ENCODE measurements at regions of chr6 and their contacts with region 1.

Region 1: DNA sequence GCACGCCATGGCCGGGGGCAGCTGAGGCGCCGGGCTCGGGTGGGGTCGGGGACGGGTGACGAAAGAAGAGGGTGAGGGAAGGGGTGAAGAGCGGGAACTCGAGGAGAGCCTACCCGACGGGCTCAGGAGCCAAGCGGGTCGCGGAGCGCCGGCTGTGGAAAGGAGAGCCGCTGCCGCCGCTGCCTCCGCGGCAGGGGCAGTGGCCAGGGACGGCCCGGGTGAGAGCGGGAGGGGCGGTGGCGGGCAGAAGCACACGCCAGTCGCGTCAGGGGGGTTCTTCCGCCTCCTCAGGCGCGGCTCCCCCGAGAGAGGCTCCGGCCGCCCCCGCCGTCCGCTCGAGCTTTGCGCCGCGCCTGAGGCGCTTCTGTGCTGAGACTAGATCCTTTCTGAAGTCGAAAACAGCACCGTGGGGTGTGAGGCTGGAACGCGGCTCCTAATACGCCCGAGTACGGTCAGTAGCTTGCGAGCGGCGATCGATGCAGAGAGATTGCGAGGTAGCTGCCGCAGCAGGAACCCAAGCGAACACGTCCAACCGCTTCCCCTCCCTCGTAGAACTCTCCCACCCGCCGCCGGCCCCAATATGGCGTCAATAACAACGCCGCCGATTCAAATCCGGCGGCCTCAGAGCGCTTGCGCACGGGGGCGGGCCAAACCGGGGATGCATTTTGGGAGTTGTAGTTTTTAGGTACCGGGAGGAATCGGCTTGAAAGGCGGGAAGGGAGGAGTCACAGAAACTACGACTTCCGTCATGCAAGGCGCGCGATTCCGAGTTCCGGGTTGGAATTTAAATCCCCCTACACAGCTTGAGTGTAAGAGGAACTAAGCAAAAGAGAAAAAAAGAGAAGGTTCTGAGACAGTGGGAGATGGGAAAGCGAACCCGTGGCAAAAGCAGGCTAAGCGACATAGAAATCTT is at the start of gene AKIRIN2:
- DNase-seq: peak; percentile 100
- H3K4me3 ChIP-seq: peak within 1 kb of the TSS; percentile 94
- H3K27ac ChIP-seq: peak within 1 kb of the TSS; percentile 89
- H3K4me1 ChIP-seq: peaks cover 50% of the 10 kb centered on the region
- CTCF ChIP-seq: no peak
- total RNA-seq, gene AKIRIN2: 70.3 and 70.4 TPM in 2 replicates

Region 2: GRCh38 chr6:87682310-87682709 is 19.6 kb before region 1 on chr6:
- CTCF ChIA-PET with region 1: no interaction called
- POLR2A ChIA-PET with region 1: interaction called, 48 read pairs
- intact Hi-C with region 1: no loop called
- DNase-seq: no peak
- H3K4me3 ChIP-seq: no peak overlapping the region
- H3K27ac ChIP-seq: no peak overlapping the region
- H3K4me1 ChIP-seq: no peaks in the 10 kb centered on the region
- CTCF ChIP-seq: no peak

Region 3: DNA sequence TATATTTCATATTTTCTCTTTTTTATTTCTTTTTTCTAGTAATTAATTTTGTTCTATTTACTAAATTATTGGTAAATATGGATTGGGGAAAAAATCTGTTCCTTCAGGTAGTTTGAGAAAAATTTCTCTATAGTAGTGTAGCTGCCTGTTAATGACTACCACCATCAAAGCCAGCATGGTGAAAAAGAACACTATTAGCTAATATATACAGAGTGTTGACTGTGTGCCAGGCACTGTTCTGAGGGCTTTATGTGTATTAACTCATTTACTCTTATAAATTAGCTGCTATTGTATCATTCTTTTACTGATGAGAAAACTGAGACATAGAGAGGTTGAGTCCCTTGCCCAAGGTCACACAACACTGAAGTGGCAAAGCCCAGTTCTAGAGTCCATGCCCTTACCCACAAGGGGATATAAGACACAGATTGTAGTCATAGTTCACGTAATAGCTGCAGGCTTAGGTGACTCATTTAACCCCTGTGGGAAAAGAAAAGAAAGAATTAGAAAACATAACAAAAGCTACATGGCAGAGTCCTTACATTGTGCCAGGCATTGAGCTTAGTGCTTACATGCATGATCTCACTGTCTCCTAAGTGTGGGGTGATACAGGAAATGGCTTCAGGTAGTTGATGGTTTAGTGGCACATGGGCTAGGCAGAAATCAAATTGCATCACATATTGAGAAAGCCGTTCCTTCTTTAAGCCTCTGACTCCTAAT is 12.3 kb after region 1 on chr6:
- CTCF ChIA-PET with region 1: interaction called, 3 read pairs
- POLR2A ChIA-PET with region 1: interaction called, 15 read pairs
- intact Hi-C with region 1: no loop called
- DNase-seq: peak; percentile 46
- H3K4me3 ChIP-seq: no peak overlapping the region
- H3K27ac ChIP-seq: no peak overlapping the region
- H3K4me1 ChIP-seq: peaks cover 21% of the 10 kb centered on the region
- CTCF ChIP-seq: no peak

Region 4: GRCh38 chr6:87799651-87800050 is 97.7 kb after region 1 on chr6:
- CTCF ChIA-PET with region 1: no interaction called
- POLR2A ChIA-PET with region 1: interaction called, 67 read pairs
- intact Hi-C with region 1: loop called (anchors 2 kb)
- DNase-seq: peak; percentile 80
- H3K4me3 ChIP-seq: peak overlapping the region; percentile 66
- H3K27ac ChIP-seq: peak overlapping the region; percentile 91
- H3K4me1 ChIP-seq: peaks cover 94% of the 10 kb centered on the region
- CTCF ChIP-seq: no peak

Region 5: DNA sequence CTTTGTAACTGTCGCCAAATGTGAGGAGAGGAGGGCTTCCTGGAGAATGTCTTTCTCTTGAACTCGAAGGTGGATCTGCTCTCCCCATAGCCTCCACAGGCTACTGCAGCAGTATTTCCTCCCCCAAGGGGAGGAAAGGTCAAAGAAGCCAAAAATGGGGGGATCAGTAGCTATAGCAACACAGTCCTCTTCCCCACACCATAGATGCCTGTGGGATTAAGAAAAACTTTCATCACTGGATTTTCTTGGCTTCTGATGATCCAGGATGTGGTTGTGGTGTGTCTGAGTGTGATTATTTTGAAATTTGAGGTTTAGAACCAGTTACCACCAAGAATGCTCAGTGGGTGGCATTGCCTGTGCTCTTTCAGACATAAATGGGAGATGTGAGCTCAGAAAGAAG is 205.6 kb after region 1 on chr6:
- CTCF ChIA-PET with region 1: no interaction called
- POLR2A ChIA-PET with region 1: interaction called, 18 read pairs
- intact Hi-C with region 1: no loop called
- DNase-seq: peak; percentile 72
- H3K4me3 ChIP-seq: no peak overlapping the region
- H3K27ac ChIP-seq: peak overlapping the region; percentile 99
- H3K4me1 ChIP-seq: peaks cover 98% of the 10 kb centered on the region
- CTCF ChIP-seq: no peak

Region 6: DNA sequence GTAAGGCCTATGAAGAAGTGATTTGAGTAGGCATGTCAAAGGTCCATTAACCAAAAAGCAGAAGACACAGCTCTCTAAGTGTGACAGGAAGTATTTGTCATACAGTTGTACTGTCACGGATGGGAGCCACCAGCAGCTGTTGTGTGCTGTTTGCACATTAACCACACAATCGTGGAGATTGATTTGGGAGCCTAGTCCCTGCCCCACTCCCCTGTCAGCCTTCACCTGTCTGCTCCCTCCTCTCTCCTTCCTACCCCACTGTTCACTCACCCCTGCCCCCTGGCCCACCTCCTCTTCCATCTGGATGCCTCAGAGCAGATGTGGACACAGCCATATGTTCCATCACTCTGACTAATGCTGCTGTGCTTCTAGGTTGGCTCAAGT is 221.0 kb after region 1 on chr6:
- CTCF ChIA-PET with region 1: no interaction called
- POLR2A ChIA-PET with region 1: interaction called, 66 read pairs
- intact Hi-C with region 1: loop called (anchors 2 kb)
- DNase-seq: peak; percentile 98
- H3K4me3 ChIP-seq: peak overlapping the region; percentile 31
- H3K27ac ChIP-seq: peak overlapping the region; percentile 99
- H3K4me1 ChIP-seq: peaks cover 99% of the 10 kb centered on the region
- CTCF ChIP-seq: no peak

Region 7: GRCh38 chr6:88477413-88477812 is 775.5 kb after region 1 on chr6:
- CTCF ChIA-PET with region 1: no interaction called
- POLR2A ChIA-PET with region 1: no interaction called
- intact Hi-C with region 1: no loop called
- DNase-seq: no peak
- H3K4me3 ChIP-seq: no peak overlapping the region
- H3K27ac ChIP-seq: no peak overlapping the region
- H3K4me1 ChIP-seq: peaks cover 8% of the 10 kb centered on the region
- CTCF ChIP-seq: 0 out of 2 replicates have a peak, but pooled peaks have one; percentile 26